HEK293 (cell line): ENCODE measurements at regions of chr11 and their contacts with region 1.

Region 1: GRCh38 chr11:57800444-57801182 is 39.0 kb downstream of the CTNND1 start:
- H3K4me3 ChIP-seq: no peak overlapping the region
- H3K27ac ChIP-seq: no peak overlapping the region
- H3K4me1 ChIP-seq: no peaks in the 10 kb centered on the region
- CTCF ChIP-seq: peak; percentile 46; the same call in 1 of the 2 replicates

Region 2: GRCh38 chr11:57703341-57703740 is 97.3 kb before region 1 on chr11:
- CTCF ChIA-PET with region 1: interaction called, 11 read pairs
- POLR2A ChIA-PET with region 1: no interaction called
- H3K4me3 ChIP-seq: no peak overlapping the region
- H3K27ac ChIP-seq: no peak overlapping the region
- H3K4me1 ChIP-seq: no peaks in the 10 kb centered on the region
- CTCF ChIP-seq: no peak

Region 3: GRCh38 chr11:57741132-57742086 is 59.2 kb before region 1 on chr11 and contains the start of gene SELENOH:
- CTCF ChIA-PET with region 1: interaction called, 23 read pairs
- POLR2A ChIA-PET with region 1: interaction called, 10 read pairs
- H3K4me3 ChIP-seq: peak within 1 kb of the TSS; percentile 85
- H3K27ac ChIP-seq: peak within 1 kb of the TSS; percentile 75
- H3K4me1 ChIP-seq: no peaks in the 10 kb centered on the region
- CTCF ChIP-seq: no peak

Region 4: GRCh38 chr11:57761301-57762234 is 39.0 kb before region 1 on chr11 and contains the start of gene CTNND1:
- CTCF ChIA-PET with region 1: interaction called, 151 read pairs
- POLR2A ChIA-PET with region 1: interaction called, 16 read pairs
- H3K4me3 ChIP-seq: peak within 1 kb of the TSS; percentile 50
- H3K27ac ChIP-seq: peak within 1 kb of the TSS; percentile 86
- H3K4me1 ChIP-seq: peaks cover 8% of the 10 kb centered on the region; the same call in 1 of the 2 replicates
- CTCF ChIP-seq: no peak

Region 5: GRCh38 chr11:57787920-57788702 is 12.5 kb before region 1 on chr11:
- CTCF ChIA-PET with region 1: interaction called, 14 read pairs
- POLR2A ChIA-PET with region 1: interaction called, 5 read pairs
- H3K4me3 ChIP-seq: no peak overlapping the region
- H3K27ac ChIP-seq: no peak overlapping the region
- H3K4me1 ChIP-seq: no peaks in the 10 kb centered on the region
- CTCF ChIP-seq: no peak

Region 6: DNA sequence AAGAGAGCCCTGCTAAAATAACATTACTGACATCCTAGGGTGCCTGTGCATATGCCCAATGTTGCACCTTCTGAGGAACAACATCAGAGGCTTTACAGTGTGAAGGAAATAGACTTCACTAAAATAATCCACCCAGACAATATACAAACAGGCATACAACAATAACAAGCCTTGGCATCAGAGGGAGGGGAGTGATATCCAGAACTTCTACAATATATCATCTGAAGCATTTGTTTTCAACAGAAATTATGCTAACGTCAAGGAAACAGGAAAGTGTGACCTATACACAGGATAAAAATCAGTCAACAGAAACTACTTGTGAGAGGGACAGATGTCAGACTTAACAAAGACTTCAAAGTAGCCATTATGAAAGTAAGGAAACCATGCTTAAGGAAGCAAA is 42.3 kb after region 1 on chr11:
- CTCF ChIA-PET with region 1: no interaction called
- POLR2A ChIA-PET with region 1: no interaction called
- H3K4me3 ChIP-seq: no peak overlapping the region
- H3K27ac ChIP-seq: no peak overlapping the region
- H3K4me1 ChIP-seq: no peaks in the 10 kb centered on the region
- CTCF ChIP-seq: no peak